ENCODE measurements at regions of chr16 and their contacts with region 1.

Region 1: GRCh38 chr16:85514595-85515318 is 98.4 kb upstream of the GSE1 start:
- DNase-seq: peak; percentile 28
- ATAC-seq: peak; percentile 78
- H3K4me3 ChIP-seq: no peak overlapping the region; a peak in 1 of 4 replicates
- H3K27ac ChIP-seq: peak overlapping the region; percentile 78
- H3K4me1 ChIP-seq: peaks cover 34% of the 10 kb centered on the region
- H3K27me3 ChIP-seq: no peaks in the 10 kb centered on the region
- CTCF ChIP-seq: no peak

Region 2: DNA sequence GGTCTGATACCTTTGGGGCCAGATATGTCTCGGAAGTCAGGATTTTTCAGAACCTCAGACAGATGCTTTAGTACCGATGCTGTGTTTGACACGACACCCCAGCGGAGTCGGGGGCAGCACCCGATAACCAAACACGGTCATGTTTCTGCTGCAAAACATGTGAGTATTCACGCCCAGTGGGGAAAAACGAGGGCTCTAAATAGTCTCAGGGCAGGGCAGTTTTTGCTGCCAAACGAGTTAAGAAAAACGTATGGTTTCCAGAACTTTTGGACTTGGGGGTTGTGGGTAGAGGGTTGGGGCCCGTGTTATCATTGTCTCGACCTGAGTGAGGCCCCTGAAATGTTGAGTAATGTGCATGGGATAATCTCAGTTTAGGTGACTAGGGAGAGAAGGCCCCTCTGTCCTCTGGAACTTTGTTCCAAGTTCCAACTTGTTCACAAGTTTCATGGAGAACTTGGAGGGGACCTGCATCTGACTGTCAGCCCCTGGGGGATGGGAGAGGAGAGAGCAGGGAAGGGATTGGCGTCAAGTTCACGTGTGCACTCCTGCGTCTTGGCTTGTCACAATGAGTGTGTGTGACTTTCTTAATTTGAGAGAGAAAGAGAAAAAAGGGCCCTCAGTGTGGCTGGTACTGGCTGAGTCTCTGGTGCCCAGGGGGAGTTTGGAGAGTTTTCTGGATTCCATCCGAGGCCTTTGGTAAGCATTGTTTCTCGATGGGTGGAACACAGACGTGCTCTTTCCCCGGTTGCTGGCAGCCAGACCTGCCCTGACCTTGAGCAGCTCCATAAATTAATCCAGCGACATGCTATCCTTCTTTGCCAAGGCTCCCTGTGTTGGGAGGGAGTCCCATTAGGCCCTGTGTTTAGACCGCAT is 318.6 kb before region 1 on chr16:
- CTCF ChIA-PET with region 1: no interaction called
- POLR2A ChIA-PET with region 1: no interaction called
- in situ Hi-C with region 1: no loop called
- intact Hi-C with region 1: no loop called
- DNase-seq: no peak
- ATAC-seq: no peak
- H3K4me3 ChIP-seq: no peak overlapping the region
- H3K27ac ChIP-seq: no peak overlapping the region
- H3K4me1 ChIP-seq: peaks cover 2% of the 10 kb centered on the region
- H3K27me3 ChIP-seq: no peaks in the 10 kb centered on the region
- CTCF ChIP-seq: no peak

Region 3: DNA sequence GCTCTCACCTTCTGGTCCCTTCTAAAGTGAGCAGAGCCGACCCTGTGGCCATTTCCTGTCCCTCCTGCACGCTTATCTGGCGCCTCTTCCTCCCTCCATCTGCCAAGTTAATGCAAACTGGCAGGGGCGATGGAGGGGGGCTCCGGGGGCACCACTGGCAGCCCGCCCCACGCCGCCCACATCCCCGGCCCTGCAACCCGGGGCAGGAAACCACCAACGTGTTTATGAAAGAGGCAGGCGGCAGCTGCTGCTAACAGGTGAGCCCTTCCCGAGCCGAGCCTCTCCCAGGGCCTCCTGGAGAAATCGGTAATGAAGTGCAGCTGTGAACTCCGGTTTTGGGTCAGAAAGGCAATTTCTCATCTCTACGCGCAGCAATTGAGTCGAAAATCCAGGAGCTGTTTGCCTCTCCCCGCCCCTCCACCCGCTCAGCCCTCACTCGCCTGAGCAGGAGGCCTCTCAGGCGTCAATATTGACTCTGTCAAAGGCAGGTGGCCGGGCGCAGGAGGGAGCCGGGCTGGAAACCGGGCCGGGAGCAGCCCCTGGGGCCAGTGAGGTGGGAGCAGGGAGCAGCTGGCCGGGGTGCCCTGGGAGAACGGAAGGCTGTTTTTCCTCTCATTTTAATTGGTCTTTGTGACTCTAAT is 66.1 kb before region 1 on chr16:
- CTCF ChIA-PET with region 1: no interaction called
- POLR2A ChIA-PET with region 1: no interaction called
- in situ Hi-C with region 1: no loop called
- intact Hi-C with region 1: no loop called
- DNase-seq: no peak
- ATAC-seq: no peak
- H3K4me3 ChIP-seq: no peak overlapping the region
- H3K27ac ChIP-seq: no peak overlapping the region
- H3K4me1 ChIP-seq: peaks cover 21% of the 10 kb centered on the region
- H3K27me3 ChIP-seq: no peaks in the 10 kb centered on the region
- CTCF ChIP-seq: no peak

Region 4: DNA sequence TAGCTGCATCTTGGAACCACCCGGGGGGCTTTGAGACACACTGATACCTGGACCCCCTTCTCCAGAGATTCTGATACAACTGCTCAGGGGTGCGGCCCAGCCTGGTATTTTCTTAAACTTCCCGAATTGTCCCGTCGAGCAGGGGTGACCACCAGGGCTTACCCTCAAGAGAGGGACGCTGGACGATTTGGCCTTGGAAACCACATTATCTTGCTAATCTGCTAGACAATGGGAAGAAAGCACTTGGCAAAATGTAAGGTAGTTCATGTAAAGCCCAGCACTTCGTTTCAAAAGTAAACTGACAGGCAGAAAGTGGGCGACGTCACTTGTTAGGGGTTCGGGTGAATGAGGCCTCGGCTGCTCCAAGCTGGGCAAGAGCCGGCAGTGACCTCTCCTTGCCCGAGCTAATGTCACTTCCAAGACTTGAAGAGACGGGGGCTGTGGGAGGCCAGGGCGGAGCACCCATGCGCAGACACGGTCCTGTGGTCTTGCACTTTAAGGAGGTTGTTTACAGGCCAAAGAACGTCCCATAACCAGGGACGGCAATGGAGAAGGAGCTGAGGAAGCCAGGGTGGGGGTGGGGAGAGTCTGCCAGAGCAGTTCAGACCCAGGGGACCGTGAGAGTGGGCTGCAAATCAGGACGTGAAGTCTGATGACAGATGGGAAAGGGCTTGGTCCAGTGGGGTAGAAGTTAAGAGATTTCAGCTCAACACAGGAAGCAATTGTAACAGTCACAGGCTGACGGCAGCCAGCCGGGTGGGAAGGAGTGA is 54.3 kb before region 1 on chr16:
- CTCF ChIA-PET with region 1: no interaction called
- POLR2A ChIA-PET with region 1: interaction called, 10 read pairs
- in situ Hi-C with region 1: no loop called
- intact Hi-C with region 1: no loop called
- DNase-seq: no peak
- ATAC-seq: no peak
- H3K4me3 ChIP-seq: no peak overlapping the region
- H3K27ac ChIP-seq: peak overlapping the region; percentile 67
- H3K4me1 ChIP-seq: peaks cover 70% of the 10 kb centered on the region
- H3K27me3 ChIP-seq: no peaks in the 10 kb centered on the region
- CTCF ChIP-seq: no peak

Region 5: GRCh38 chr16:85569615-85570212 is 55.0 kb after region 1 on chr16:
- CTCF ChIA-PET with region 1: no interaction called
- POLR2A ChIA-PET with region 1: no interaction called
- in situ Hi-C with region 1: no loop called
- intact Hi-C with region 1: no loop called
- DNase-seq: no peak
- ATAC-seq: peak; percentile 43
- H3K4me3 ChIP-seq: no peak overlapping the region
- H3K27ac ChIP-seq: peak overlapping the region; percentile 91
- H3K4me1 ChIP-seq: peaks cover 88% of the 10 kb centered on the region
- H3K27me3 ChIP-seq: no peaks in the 10 kb centered on the region
- CTCF ChIP-seq: no peak

Region 6: GRCh38 chr16:85583491-85584181 is 68.9 kb after region 1 on chr16:
- CTCF ChIA-PET with region 1: no interaction called
- POLR2A ChIA-PET with region 1: no interaction called
- in situ Hi-C with region 1: no loop called
- intact Hi-C with region 1: no loop called
- DNase-seq: no peak
- ATAC-seq: no peak
- H3K4me3 ChIP-seq: no peak overlapping the region
- H3K27ac ChIP-seq: no peak overlapping the region
- H3K4me1 ChIP-seq: peaks cover 63% of the 10 kb centered on the region
- H3K27me3 ChIP-seq: no peaks in the 10 kb centered on the region
- CTCF ChIP-seq: no peak

Measured in Panc1 (cell line).